HEK293 (cell line): ENCODE measurements at regions of chr6 and their contacts with region 1.

Region 1: GRCh38 chr6:147675281-147675680 is 166.8 kb downstream of the SAMD5 start:
- H3K4me3 ChIP-seq: no peak overlapping the region
- H3K27ac ChIP-seq: no peak overlapping the region
- H3K4me1 ChIP-seq: peaks cover 5% of the 10 kb centered on the region; the same call in 1 of the 2 replicates
- CTCF ChIP-seq: no peak

Region 2: GRCh38 chr6:147700436-147701209 is 25.3 kb after region 1 on chr6:
- CTCF ChIA-PET with region 1: no interaction called
- POLR2A ChIA-PET with region 1: no interaction called
- H3K4me3 ChIP-seq: no peak overlapping the region
- H3K27ac ChIP-seq: no peak overlapping the region
- H3K4me1 ChIP-seq: peaks cover 4% of the 10 kb centered on the region; the same call in 1 of the 2 replicates
- CTCF ChIP-seq: no peak

Region 3: GRCh38 chr6:149440735-149441671 is 1765.7 kb after region 1 on chr6:
- CTCF ChIA-PET with region 1: interaction called, 12 read pairs
- POLR2A ChIA-PET with region 1: no interaction called
- H3K4me3 ChIP-seq: no peak overlapping the region
- H3K27ac ChIP-seq: no peak overlapping the region; the same call in 1 of the 2 replicates
- H3K4me1 ChIP-seq: no peaks in the 10 kb centered on the region; the same call in 1 of the 2 replicates
- CTCF ChIP-seq: no peak